ENCODE measurements at regions of chr15 and their contacts with region 1.

Region 1: DNA sequence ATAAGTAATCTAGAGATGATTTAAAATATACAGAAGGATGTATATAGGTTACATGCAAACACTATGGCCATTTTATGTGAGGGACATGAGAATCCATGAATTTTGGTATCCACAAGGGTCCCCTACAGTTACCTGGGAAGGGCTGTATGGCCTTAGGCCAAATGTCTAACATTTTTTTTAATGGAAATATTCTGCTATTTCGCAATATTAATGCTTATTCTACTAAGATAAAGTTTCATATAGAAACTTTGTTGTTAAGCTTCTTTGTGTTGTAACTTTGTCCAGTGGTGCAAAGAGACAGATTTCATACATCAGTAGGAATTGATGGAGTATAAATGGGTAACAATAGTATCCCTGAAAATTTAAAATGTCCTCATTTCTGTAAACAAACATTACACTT is 233.4 kb upstream of the THBS1 start:
- DNase-seq: no peak
- ATAC-seq: no peak
- H3K4me3 ChIP-seq: no peak overlapping the region
- H3K27ac ChIP-seq: no peak overlapping the region
- H3K4me1 ChIP-seq: no peaks in the 10 kb centered on the region
- H3K27me3 ChIP-seq: no peaks in the 10 kb centered on the region
- CTCF ChIP-seq: no peak
- POLR2A ChIP-seq: no peak
- RAD21 ChIP-seq: no peak

Region 2: GRCh38 chr15:39357480-39358268 is 10.2 kb after region 1 on chr15:
- CTCF ChIA-PET with region 1: no interaction called
- POLR2A ChIA-PET with region 1: no interaction called
- dilution Hi-C with region 1: no loop called
- in situ Hi-C with region 1: no loop called
- intact Hi-C with region 1: loop called (anchors 1 kb)
- DNase-seq: no peak
- ATAC-seq: peak; percentile 6; the same call in 1 of the 2 replicates
- H3K4me3 ChIP-seq: no peak overlapping the region
- H3K27ac ChIP-seq: peak overlapping the region; percentile 96; the same call in 1 of the 2 replicates
- H3K4me1 ChIP-seq: peaks cover 14% of the 10 kb centered on the region
- H3K27me3 ChIP-seq: no peaks in the 10 kb centered on the region
- CTCF ChIP-seq: no peak
- POLR2A ChIP-seq: no peak
- RAD21 ChIP-seq: no peak

Region 3: GRCh38 chr15:39666677-39667076 is 319.2 kb after region 1 on chr15:
- CTCF ChIA-PET with region 1: no interaction called
- POLR2A ChIA-PET with region 1: no interaction called
- dilution Hi-C with region 1: no loop called
- in situ Hi-C with region 1: no loop called
- intact Hi-C with region 1: no loop called
- DNase-seq: peak; percentile 72
- ATAC-seq: peak; percentile 89
- H3K4me3 ChIP-seq: no peak overlapping the region
- H3K27ac ChIP-seq: peak overlapping the region; percentile 75; the same call in 1 of the 2 replicates
- H3K4me1 ChIP-seq: peaks cover 10% of the 10 kb centered on the region
- H3K27me3 ChIP-seq: no peaks in the 10 kb centered on the region
- CTCF ChIP-seq: no peak
- POLR2A ChIP-seq: no peak
- RAD21 ChIP-seq: no peak